IMR-90 (cell line): ENCODE measurements at regions of chr11 and their contacts with region 1.

Region 1: DNA sequence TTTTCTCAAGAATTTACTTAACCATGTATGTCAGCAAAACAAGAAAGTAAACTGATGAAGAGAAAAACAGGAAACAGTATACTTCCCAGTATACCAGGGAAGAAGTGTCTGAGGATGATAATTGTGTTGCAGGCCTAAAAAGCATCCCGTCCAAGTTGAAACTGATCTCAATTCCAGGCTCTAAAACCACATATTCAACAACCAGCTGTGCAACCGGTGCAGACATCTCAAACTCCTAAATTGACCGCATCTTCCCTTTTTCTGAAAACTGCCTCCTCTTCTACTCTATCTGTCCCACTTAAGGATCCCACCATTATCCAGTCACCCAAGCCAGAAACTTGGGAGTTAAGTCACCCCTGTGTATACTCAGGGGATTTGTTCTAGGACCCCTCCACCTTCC is 47.2 kb downstream of the CCDC83 start:
- DNase-seq: no peak
- ATAC-seq: no peak
- H3K4me3 ChIP-seq: no peak overlapping the region
- H3K27ac ChIP-seq: no peak overlapping the region
- H3K4me1 ChIP-seq: no peaks in the 10 kb centered on the region; the same call in 1 of the 2 replicates
- H3K27me3 ChIP-seq: no peaks in the 10 kb centered on the region
- CTCF ChIP-seq: no peak
- POLR2A ChIP-seq: no peak
- RAD21 ChIP-seq: no peak

Region 2: GRCh38 chr11:85694386-85694980 is 207.9 kb before region 1 on chr11:
- CTCF ChIA-PET with region 1: no interaction called
- POLR2A ChIA-PET with region 1: no interaction called
- dilution Hi-C with region 1: no loop called
- in situ Hi-C with region 1: no loop called
- intact Hi-C with region 1: no loop called
- DNase-seq: peak; percentile 71
- ATAC-seq: peak; percentile 69
- H3K4me3 ChIP-seq: no peak overlapping the region
- H3K27ac ChIP-seq: peak overlapping the region; percentile 63; the same call in 1 of the 2 replicates
- H3K4me1 ChIP-seq: peaks cover 6% of the 10 kb centered on the region
- H3K27me3 ChIP-seq: no peaks in the 10 kb centered on the region
- CTCF ChIP-seq: peak; percentile 67
- POLR2A ChIP-seq: no peak
- RAD21 ChIP-seq: peak; percentile 77

Region 3: DNA sequence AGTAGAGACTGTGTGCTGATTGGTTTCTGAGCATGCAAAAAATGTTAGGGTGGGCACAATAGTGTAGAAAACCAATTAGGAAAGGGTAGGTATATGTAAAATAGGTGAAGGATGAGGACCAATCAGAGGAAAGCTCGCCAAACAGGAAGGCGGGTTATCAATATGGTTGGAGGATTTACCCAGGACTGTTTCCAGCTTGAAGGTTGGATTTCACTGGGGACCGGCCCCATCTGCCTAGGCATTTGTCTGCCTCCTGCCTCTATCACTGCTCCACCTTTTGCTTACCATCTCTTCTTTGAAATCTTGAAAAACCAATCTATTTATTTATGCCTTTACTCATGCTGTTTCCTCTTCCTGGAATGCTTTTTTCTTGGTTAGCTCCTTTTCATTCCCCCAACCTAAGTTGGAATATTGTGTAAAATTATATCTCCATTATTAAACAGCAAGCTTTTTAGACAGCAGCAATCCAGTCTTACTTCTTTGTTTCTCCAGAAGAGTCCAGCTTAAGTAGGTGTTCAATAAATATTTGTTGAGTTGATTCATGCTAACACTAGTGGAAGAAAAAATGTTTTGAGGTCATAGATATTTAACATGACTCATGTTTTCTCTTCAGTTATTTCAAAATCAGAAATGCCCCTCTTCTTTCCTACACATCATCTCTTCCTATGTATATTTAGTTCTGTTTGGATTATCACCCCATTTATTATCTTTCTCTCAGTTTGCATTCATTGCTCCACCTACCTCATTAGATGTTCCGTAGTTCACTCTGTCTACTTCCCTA is 27.0 kb before region 1 on chr11:
- CTCF ChIA-PET with region 1: no interaction called
- POLR2A ChIA-PET with region 1: no interaction called
- dilution Hi-C with region 1: no loop called
- in situ Hi-C with region 1: no loop called
- intact Hi-C with region 1: no loop called
- DNase-seq: peak; percentile 83
- ATAC-seq: peak; percentile 79
- H3K4me3 ChIP-seq: no peak overlapping the region
- H3K27ac ChIP-seq: peak overlapping the region; percentile 55; the same call in 1 of the 2 replicates
- H3K4me1 ChIP-seq: peaks cover 9% of the 10 kb centered on the region
- H3K27me3 ChIP-seq: no peaks in the 10 kb centered on the region
- CTCF ChIP-seq: no peak
- POLR2A ChIP-seq: no peak
- RAD21 ChIP-seq: no peak

Region 4: DNA sequence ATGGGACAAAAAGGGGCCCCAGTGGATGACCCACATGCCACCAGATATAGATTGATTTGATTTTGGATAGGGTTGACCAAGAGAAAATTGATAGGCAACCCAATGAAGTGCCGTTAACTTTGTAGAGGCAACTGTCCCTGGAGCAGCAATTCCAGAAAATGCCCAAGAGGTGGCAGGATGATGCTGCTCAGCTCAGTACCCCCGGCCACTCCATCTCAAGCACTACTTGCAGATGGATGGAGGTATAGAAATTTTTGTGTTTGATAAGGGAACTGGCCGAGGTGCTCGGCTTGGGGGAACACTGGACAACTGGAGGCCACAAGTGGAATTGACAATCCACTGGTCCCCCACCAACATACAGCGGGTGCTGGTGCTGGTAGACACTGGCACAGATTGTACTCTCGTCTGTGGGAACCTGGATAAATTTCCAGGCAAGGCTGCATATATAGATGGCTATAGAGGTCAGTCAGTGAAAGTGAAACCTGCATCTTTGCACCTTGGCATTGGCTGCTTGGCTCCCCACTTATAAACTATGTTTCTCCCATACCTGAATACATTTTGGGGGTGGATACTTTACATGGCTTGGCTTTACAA is 39.1 kb after region 1 on chr11:
- CTCF ChIA-PET with region 1: no interaction called
- POLR2A ChIA-PET with region 1: no interaction called
- dilution Hi-C with region 1: no loop called
- in situ Hi-C with region 1: no loop called
- intact Hi-C with region 1: loop called (anchors 5 kb)
- DNase-seq: peak; percentile 74
- ATAC-seq: peak; percentile 93
- H3K4me3 ChIP-seq: no peak overlapping the region
- H3K27ac ChIP-seq: no peak overlapping the region
- H3K4me1 ChIP-seq: peaks cover 5% of the 10 kb centered on the region; the same call in 1 of the 2 replicates
- H3K27me3 ChIP-seq: no peaks in the 10 kb centered on the region
- CTCF ChIP-seq: peak; percentile 74
- POLR2A ChIP-seq: no peak
- RAD21 ChIP-seq: peak; percentile 81

Region 5: GRCh38 chr11:86116386-86116726 is 214.0 kb after region 1 on chr11:
- CTCF ChIA-PET with region 1: no interaction called
- POLR2A ChIA-PET with region 1: no interaction called
- dilution Hi-C with region 1: no loop called
- in situ Hi-C with region 1: no loop called
- intact Hi-C with region 1: no loop called
- DNase-seq: peak; percentile 98
- ATAC-seq: peak; percentile 80
- H3K4me3 ChIP-seq: no peak overlapping the region; the same call in 1 of the 2 replicates
- H3K27ac ChIP-seq: peak overlapping the region; percentile 59; the same call in 1 of the 2 replicates
- H3K4me1 ChIP-seq: peaks cover 9% of the 10 kb centered on the region
- H3K27me3 ChIP-seq: no peaks in the 10 kb centered on the region
- CTCF ChIP-seq: no peak
- POLR2A ChIP-seq: peak; percentile 30; the same call in 1 of the 2 replicates
- RAD21 ChIP-seq: no peak